GM10248 (cell line): ENCODE measurements at regions of chr5 and their contacts with region 1.

Region 1: DNA sequence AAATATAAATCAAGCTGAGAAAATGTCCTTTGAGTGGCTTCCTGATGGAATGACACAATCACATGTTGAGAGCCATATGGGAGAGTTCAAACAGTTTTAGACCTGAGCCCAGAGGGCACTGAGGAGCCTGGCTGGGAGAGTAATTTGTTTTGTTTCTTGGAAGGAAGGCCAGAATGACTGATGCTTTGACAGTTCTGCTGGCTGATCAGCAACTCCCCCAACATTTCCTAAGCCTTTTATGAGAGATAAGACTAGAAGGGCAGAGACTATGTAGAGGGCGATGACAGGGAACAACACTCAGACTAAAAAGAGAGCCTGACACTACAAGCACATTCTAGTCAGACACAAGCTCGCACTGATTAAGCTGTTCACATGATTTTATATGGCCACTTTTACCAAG is 169.2 kb downstream of the COX7C start:
- DNase-seq: no peak
- CTCF ChIP-seq: no peak

Region 2: DNA sequence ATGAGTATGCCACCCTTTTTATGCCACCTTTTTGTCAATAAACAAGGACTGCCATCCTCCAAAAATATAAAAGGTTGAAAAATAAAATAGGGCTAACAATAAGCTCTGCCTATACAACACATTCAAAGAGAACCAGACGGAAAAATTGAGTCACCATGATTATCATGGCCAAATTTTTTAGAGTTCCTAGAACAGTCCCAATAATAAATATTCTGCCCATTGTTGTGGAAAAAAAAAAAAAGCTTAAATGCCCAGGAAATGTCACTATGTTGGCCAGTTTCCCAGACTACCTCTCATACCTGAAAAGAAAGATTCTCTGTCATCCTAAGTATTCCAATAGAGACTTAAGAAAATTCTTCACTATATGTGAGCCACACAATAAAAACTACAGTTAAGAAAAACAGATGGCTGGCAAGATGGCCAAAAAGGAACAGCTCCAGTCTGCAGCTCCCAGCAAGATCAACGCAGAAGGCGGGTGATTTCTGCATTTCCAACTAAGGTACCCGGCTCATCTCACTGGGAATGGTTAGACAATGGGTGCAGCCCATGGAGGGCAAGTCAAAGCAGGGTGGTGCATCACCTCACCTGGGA is 1332.7 kb after region 1 on chr5:
- CTCF ChIA-PET with region 1: no interaction called
- POLR2A ChIA-PET with region 1: interaction called, 16 read pairs
- DNase-seq: no peak
- CTCF ChIP-seq: no peak